Ovary (tissue), 10 donors: ENCODE measurements at regions of chr2 and their contacts with region 1.

Region 1: GRCh38 chr2:42567806-42568400 is 529 bp upstream of the MTA3 start:
- DNase-seq: peak; percentile 61 to 76 (median 68)
- H3K4me3 ChIP-seq: peak overlapping the region; percentile 96
- H3K27ac ChIP-seq: peak overlapping the region; percentile 99
- H3K4me1 ChIP-seq: peaks cover 18% of the 10 kb centered on the region
- H3K27me3 ChIP-seq: no peaks in the 10 kb centered on the region
- CTCF ChIP-seq: no peak
- EP300 ChIP-seq: no peak
- POLR2A ChIP-seq: no peak

Region 2: GRCh38 chr2:42513257-42513918 is 54.5 kb before region 1 on chr2:
- intact Hi-C with region 1: loop called in 1 of 4 experiments (anchors 1 kb)
- DNase-seq: no peak
- H3K4me3 ChIP-seq: no peak overlapping the region
- H3K27ac ChIP-seq: no peak overlapping the region
- H3K4me1 ChIP-seq: peaks cover 2% of the 10 kb centered on the region
- H3K27me3 ChIP-seq: no peaks in the 10 kb centered on the region
- CTCF ChIP-seq: no peak
- EP300 ChIP-seq: no peak
- POLR2A ChIP-seq: no peak